B cell (primary cell): ENCODE measurements at regions of chr20 and their contacts with region 1.

Region 1: GRCh38 chr20:51385646-51386530 is 156.6 kb downstream of the NFATC2 start:
- DNase-seq: peak; percentile 63
- ATAC-seq: peak; percentile 51
- H3K4me3 ChIP-seq: no peak overlapping the region
- H3K4me3 Mint-ChIP-seq: no peak overlapping the region
- H3K27ac ChIP-seq: peak overlapping the region in 1 of 2 donors; percentile 40
- H3K27ac Mint-ChIP-seq: peak overlapping the region; percentile 65
- H3K4me1 ChIP-seq: peaks cover 2 to 19% of the 10 kb centered on the region in 2 donors
- H3K4me1 Mint-ChIP-seq: peaks cover 24% of the 10 kb centered on the region
- H3K27me3 ChIP-seq: no peaks in the 10 kb centered on the region
- H3K27me3 Mint-ChIP-seq: no peaks in the 10 kb centered on the region
- CTCF ChIP-seq: peak; percentile 74

Region 2: DNA sequence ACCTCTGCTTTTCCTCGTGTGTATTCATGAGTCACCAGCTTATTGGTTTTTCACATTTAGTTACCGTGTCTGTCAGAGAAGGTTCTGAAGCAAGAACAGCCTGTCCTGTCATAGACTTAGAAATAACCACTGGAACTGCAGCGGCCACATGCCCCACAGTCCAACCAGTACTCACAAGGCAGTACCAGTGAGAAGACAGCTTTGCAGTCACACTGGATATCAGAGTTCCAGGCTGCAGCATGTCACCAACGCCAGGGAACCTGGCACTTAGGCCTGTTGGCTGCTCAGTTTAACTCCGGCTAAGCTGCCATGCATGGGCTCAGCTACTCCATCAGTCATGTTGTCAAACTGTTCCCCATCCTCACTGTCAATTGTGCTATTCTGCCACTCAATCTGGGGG is 494.8 kb before region 1 on chr20:
- CTCF ChIA-PET with region 1: no interaction called
- POLR2A ChIA-PET with region 1: no interaction called
- intact Hi-C with region 1: no loop called
- DNase-seq: no peak
- ATAC-seq: no peak
- H3K4me3 ChIP-seq: no peak overlapping the region
- H3K4me3 Mint-ChIP-seq: no peak overlapping the region
- H3K27ac ChIP-seq: no peak overlapping the region
- H3K27ac Mint-ChIP-seq: peak overlapping the region; percentile 51
- H3K4me1 ChIP-seq: no peaks in the 10 kb centered on the region
- H3K4me1 Mint-ChIP-seq: peaks cover 5% of the 10 kb centered on the region
- H3K27me3 ChIP-seq: no peaks in the 10 kb centered on the region
- H3K27me3 Mint-ChIP-seq: no peaks in the 10 kb centered on the region
- CTCF ChIP-seq: no peak

Region 3: GRCh38 chr20:51372176-51372803 is 13.6 kb before region 1 on chr20:
- CTCF ChIA-PET with region 1: interaction called, 15 read pairs
- POLR2A ChIA-PET with region 1: no interaction called
- intact Hi-C with region 1: no loop called
- DNase-seq: peak; percentile 69
- ATAC-seq: peak; percentile 68
- H3K4me3 ChIP-seq: no peak overlapping the region
- H3K4me3 Mint-ChIP-seq: no peak overlapping the region
- H3K27ac ChIP-seq: no peak overlapping the region
- H3K27ac Mint-ChIP-seq: no peak overlapping the region
- H3K4me1 ChIP-seq: peaks cover 0 to 6% of the 10 kb centered on the region in 2 donors
- H3K4me1 Mint-ChIP-seq: peaks cover 3% of the 10 kb centered on the region
- H3K27me3 ChIP-seq: peaks cover 0 to 4% (median 0%) of the 10 kb centered on the region in 4 experiments
- H3K27me3 Mint-ChIP-seq: peaks cover 5% of the 10 kb centered on the region
- CTCF ChIP-seq: peak; percentile 75

Region 4: GRCh38 chr20:51412333-51412871 is 26.5 kb after region 1 on chr20:
- CTCF ChIA-PET with region 1: interaction called, 41 read pairs
- POLR2A ChIA-PET with region 1: interaction called, 4 read pairs
- intact Hi-C with region 1: no loop called
- DNase-seq: no peak
- ATAC-seq: no peak
- H3K4me3 ChIP-seq: no peak overlapping the region
- H3K4me3 Mint-ChIP-seq: no peak overlapping the region
- H3K27ac ChIP-seq: no peak overlapping the region
- H3K27ac Mint-ChIP-seq: peak overlapping the region; percentile 59
- H3K4me1 ChIP-seq: peaks cover 46 to 61% of the 10 kb centered on the region in 2 donors
- H3K4me1 Mint-ChIP-seq: peaks cover 65% of the 10 kb centered on the region
- H3K27me3 ChIP-seq: no peaks in the 10 kb centered on the region
- H3K27me3 Mint-ChIP-seq: no peaks in the 10 kb centered on the region
- CTCF ChIP-seq: no peak

Region 5: GRCh38 chr20:51442602-51443001 is 56.7 kb after region 1 on chr20:
- CTCF ChIA-PET with region 1: interaction called, 10 read pairs
- POLR2A ChIA-PET with region 1: interaction called, 3 read pairs
- intact Hi-C with region 1: no loop called
- DNase-seq: no peak
- ATAC-seq: no peak
- H3K4me3 ChIP-seq: no peak overlapping the region
- H3K4me3 Mint-ChIP-seq: no peak overlapping the region
- H3K27ac ChIP-seq: no peak overlapping the region
- H3K27ac Mint-ChIP-seq: no peak overlapping the region
- H3K4me1 ChIP-seq: peaks cover 9 to 17% of the 10 kb centered on the region in 2 donors
- H3K4me1 Mint-ChIP-seq: peaks cover 33% of the 10 kb centered on the region
- H3K27me3 ChIP-seq: no peaks in the 10 kb centered on the region
- H3K27me3 Mint-ChIP-seq: no peaks in the 10 kb centered on the region
- CTCF ChIP-seq: no peak

Region 6: GRCh38 chr20:51500311-51500710 is 114.4 kb after region 1 on chr20:
- CTCF ChIA-PET with region 1: interaction called, 12 read pairs
- POLR2A ChIA-PET with region 1: no interaction called
- intact Hi-C with region 1: no loop called
- DNase-seq: peak; percentile 63
- ATAC-seq: peak; percentile 76
- H3K4me3 ChIP-seq: no peak overlapping the region
- H3K4me3 Mint-ChIP-seq: no peak overlapping the region
- H3K27ac ChIP-seq: peak overlapping the region; percentile 11 to 25
- H3K27ac Mint-ChIP-seq: peak overlapping the region; percentile 29
- H3K4me1 ChIP-seq: peaks cover 71 to 89% of the 10 kb centered on the region in 2 donors
- H3K4me1 Mint-ChIP-seq: peaks cover 89% of the 10 kb centered on the region
- H3K27me3 ChIP-seq: no peaks in the 10 kb centered on the region
- H3K27me3 Mint-ChIP-seq: no peaks in the 10 kb centered on the region
- CTCF ChIP-seq: no peak

Region 7: DNA sequence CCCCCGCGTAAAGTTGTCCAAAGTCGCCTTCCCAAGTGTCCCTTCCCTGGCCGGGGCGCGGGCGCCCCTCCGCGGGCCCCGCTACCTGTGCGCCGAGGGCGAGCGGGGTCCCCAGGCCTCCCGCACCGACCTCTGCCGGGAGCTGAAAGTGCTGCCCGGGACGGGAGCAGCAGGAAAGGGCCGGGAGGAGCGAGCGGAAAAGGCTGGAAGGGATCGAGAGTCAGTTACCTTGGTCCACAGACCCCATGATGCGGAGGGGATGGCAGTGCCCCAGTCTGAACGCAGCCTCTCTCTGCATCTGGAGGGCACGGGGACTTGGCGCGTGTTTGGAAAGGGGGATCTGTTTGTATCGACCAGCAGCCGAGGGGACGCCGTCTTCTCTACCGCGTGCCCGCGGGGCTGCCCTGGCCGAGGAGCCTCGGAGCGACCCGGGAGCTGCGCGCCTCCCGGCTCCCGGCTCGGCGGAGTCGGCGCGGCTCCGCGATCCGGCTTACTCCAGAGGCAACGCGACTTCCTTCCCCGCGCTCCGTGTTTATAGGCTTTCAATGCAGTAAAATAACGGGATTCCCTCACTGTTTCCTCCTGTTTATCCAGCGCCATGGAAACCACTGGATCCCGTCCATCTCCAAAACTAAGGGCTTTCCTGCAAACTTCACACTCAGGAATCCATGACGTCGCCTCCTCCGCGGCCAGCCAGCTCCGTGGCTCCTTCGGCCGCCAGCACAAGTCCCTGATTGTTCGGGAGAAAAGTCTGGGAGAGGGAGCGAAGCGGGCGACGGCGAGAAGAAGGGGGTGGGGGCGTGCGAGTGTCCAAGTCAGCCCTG is 176.7 kb after region 1 on chr20:
- CTCF ChIA-PET with region 1: interaction called, 26 read pairs
- POLR2A ChIA-PET with region 1: no interaction called
- intact Hi-C with region 1: no loop called
- DNase-seq: peak; percentile 57
- ATAC-seq: peak; percentile 28
- H3K4me3 ChIP-seq: peak overlapping the region in 4 of 5 experiments; percentile 18 to 50 (median 38)
- H3K4me3 Mint-ChIP-seq: peak overlapping the region; percentile 78
- H3K27ac ChIP-seq: no peak overlapping the region
- H3K27ac Mint-ChIP-seq: no peak overlapping the region
- H3K4me1 ChIP-seq: peaks cover 25 to 31% of the 10 kb centered on the region in 2 donors
- H3K4me1 Mint-ChIP-seq: peaks cover 24% of the 10 kb centered on the region
- H3K27me3 ChIP-seq: peaks cover 0 to 76% (median 49%) of the 10 kb centered on the region in 4 experiments
- H3K27me3 Mint-ChIP-seq: peaks cover 52% of the 10 kb centered on the region
- CTCF ChIP-seq: no peak

Region 8: GRCh38 chr20:51624157-51624731 is 238.4 kb after region 1 on chr20:
- CTCF ChIA-PET with region 1: interaction called, 13 read pairs
- POLR2A ChIA-PET with region 1: no interaction called
- intact Hi-C with region 1: no loop called
- DNase-seq: peak; percentile 72
- ATAC-seq: peak; percentile 67
- H3K4me3 ChIP-seq: no peak overlapping the region
- H3K4me3 Mint-ChIP-seq: no peak overlapping the region
- H3K27ac ChIP-seq: no peak overlapping the region
- H3K27ac Mint-ChIP-seq: no peak overlapping the region
- H3K4me1 ChIP-seq: peaks cover 0 to 2% of the 10 kb centered on the region in 2 donors
- H3K4me1 Mint-ChIP-seq: no peaks in the 10 kb centered on the region
- H3K27me3 ChIP-seq: peaks cover 0 to 3% (median 0%) of the 10 kb centered on the region in 4 experiments
- H3K27me3 Mint-ChIP-seq: peaks cover 12% of the 10 kb centered on the region
- CTCF ChIP-seq: peak; percentile 77